ENCODE measurements at regions of chr6 and their contacts with region 1.

Region 1: DNA sequence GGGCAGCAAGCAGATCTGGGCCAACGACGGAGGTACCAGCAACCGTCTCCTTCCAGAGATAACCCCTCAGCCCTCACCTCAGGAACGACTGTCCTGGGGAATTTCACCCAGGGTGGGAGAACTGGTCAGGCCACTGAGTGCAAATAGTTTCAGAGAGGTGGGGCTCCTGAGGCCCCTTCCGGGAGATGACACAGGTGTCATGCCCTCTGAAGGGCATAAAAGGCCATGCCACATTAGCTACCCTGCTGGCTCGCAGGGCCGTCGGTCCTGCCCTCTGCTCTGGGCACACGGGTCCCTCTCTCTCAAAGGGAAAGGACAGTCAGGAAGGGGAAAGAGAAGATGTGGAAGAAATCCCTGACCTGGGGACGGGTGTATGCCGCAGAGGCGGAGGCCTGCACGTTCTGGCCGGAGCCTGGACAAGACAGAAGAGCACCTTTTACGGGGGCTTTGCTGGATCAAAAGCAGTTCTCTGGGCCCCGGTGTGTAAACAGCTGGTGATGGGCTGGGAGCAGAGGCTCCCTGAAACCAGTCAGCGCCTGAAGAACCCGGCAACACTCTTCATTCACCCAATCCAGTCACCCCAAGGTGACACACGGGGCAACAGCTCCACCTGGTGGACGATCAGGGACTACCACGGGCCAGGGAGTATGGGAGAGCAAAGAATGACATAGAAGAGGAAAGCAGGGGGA is 6.4 kb upstream of the TAF8 start:
- DNase-seq: peak; percentile 96

Region 2: GRCh38 chr6:40520678-40521077 is 1523.3 kb before region 1 on chr6:
- intact Hi-C with region 1: no loop called
- DNase-seq: no peak

Region 3: GRCh38 chr6:41602864-41603608 is 440.9 kb before region 1 on chr6:
- intact Hi-C with region 1: loop called in 1 of 2 experiments (anchors 5 kb)
- DNase-seq: peak; percentile 91

Region 4: DNA sequence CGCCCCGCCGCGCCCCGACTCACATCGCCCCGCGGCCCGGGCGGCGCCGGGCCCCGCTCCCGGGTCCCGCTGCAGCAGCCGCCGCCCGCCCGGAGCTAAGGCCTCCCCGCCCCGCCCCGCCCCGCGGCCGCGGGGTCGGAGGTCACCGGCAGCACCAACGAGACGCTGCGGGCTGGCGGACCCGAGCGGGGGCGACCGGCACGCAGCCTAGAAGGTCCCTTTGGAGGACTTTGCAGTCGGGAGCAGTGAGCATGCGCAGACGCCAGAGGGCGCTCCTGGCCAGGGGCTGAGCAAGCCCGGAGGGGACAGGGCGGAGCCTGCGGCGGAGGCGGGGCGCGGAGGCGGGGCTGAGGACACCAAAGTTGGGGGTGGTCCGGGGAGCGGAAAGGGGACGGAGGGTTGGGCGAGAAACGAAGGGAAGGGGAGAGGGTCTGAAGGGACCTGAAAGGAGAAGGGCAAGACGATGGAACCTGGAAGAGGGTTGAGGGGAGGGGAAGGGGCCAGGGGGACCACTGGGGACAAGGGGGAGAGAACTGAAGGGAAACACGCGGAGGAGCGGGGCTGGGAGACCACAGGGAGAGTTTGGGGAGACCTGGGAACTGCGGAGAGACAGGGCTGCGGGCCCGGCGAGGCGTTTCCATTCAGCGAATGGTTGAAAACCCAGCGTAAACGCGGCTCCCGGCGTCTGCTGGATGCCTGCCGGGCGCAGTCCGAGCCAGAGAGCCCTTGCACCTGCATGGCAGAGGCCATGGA is 264.0 kb before region 1 on chr6 and contains the start of gene FRS3:
- intact Hi-C with region 1: loop called (anchors 1 to 5 kb)
- DNase-seq: peak; percentile 99
- total RNA-seq, gene FRS3: 4.0 to 4.2 TPM

Region 5: DNA sequence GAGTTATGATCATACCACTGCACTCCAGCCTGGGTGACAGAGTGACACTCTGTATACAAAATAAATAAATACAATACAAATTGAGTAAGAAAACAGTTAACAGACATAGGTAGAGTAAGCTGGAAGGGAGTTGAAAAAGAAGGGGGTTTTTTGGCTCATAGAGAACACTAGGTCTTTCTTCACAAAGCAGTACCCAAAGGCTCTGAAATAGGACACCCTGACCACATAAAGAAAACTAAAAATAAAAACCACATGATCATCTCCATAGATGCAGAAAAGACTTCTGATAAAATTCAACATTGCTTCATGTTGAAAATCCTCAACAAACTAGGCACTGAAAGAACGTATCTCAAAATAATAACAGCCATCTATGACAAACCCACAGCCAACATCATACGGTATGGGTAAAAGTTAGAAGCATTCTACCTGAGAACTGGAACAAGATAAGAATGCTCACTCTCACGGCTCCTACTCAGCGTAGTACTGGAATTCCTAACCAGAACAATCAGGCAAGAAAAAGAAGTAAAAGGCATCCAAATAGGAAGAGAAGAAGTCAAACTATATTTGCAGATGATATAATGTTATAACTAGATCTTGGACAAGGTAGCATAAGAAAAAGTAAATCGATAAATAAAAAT is 207.8 kb before region 1 on chr6:
- intact Hi-C with region 1: loop called in 1 of 2 experiments (anchors 5 kb)
- DNase-seq: no peak

Region 6: DNA sequence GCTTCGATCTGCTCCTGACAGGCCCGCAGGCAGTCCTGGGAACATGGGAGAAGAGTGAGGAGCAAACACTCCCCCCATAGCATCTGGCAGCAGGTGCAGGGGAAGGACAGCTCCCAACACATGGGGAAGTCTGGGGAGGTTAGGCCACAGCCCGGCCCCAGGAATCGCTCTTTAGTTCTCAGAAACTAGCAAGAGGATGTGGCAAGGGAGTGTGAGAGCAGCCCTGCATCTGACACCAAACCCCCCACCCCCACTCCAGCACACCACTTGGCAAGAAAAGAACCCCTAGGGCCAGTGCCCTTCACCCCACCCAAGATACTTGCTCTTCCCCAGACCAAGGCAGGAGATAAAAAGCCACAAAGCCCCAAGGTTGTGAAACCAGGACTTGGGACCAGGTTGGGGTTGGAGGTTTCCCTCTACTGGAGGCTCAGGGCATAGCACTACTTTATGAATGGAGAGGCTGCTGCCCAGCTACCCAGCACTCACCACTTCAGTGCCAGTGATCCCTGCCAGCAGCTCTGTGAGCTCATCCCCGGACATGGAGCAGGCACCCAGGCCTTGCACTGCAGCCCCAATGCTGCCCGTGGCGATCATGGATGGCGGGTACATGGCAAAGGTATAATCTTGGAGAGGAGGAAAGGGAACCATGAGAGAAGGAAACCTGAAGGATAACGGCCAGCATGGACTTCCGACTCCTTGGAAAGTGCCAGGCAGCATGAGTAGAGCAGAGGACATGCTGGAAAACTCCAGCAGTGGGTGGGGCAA is 107.7 kb before region 1 on chr6:
- intact Hi-C with region 1: loop called in 1 of 2 experiments (anchors 10 kb)
- DNase-seq: peak; percentile 85

Region 7: DNA sequence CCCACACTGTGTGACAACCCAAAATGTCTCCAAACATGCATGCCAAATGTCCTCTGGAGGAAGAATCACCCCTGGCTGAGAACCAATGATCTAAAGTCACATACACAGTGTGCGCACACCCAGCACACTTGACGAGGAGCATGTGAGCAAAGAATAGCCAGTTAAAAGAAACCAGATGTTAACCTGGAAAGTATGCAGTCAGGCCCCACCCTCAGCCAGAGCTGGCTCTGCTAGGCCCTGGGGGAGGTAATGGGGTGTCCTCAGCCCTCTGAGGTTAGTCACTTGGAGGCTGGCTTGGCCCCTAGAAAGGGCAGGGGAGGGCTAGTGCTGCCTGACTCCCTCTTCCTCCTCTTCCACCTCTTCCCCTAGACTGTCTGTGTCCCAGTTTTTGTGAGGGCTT is 114.1 kb after region 1 on chr6:
- intact Hi-C with region 1: no loop called
- DNase-seq: no peak

Region 8: GRCh38 chr6:43644931-43645612 is 1601.1 kb after region 1 on chr6 and contains the start of gene RSPH9:
- intact Hi-C with region 1: no loop called
- DNase-seq: peak; percentile 89
- total RNA-seq, gene RSPH9: 0.19 to 0.23 TPM